ENCODE measurements at regions of chr17 and their contacts with region 1.

Region 1: GRCh38 chr17:64020056-64020766 is at the start of gene ICAM2:
- DNase-seq: peak; percentile 95
- H3K4me3 Mint-ChIP-seq: peak within 1 kb of the TSS; percentile 97
- H3K27ac Mint-ChIP-seq: peak within 1 kb of the TSS; percentile 98
- H3K4me1 Mint-ChIP-seq: peaks cover 62% of the 10 kb centered on the region
- H3K27me3 Mint-ChIP-seq: no peaks in the 10 kb centered on the region
- total RNA-seq, gene ICAM2: 41.6 to 41.9 TPM

Region 2: GRCh38 chr17:63773381-63774140 is 246.7 kb before region 1 on chr17 and contains the start of gene CCDC47:
- CTCF ChIA-PET with region 1: no interaction called
- intact Hi-C with region 1: loop called (anchors 1 kb)
- DNase-seq: peak; percentile 99
- H3K4me3 Mint-ChIP-seq: peak within 1 kb of the TSS; percentile 98
- H3K27ac Mint-ChIP-seq: peak within 1 kb of the TSS; percentile 100
- H3K4me1 Mint-ChIP-seq: peaks cover 58% of the 10 kb centered on the region
- H3K27me3 Mint-ChIP-seq: no peaks in the 10 kb centered on the region
- total RNA-seq, gene CCDC47: 40.5 to 42.1 TPM

Region 3: GRCh38 chr17:63984651-63985386 is 35.4 kb before region 1 on chr17:
- CTCF ChIA-PET with region 1: interaction called, 9 read pairs
- intact Hi-C with region 1: loop called (anchors 1 kb)
- DNase-seq: peak; percentile 82
- H3K4me3 Mint-ChIP-seq: no peak overlapping the region
- H3K27ac Mint-ChIP-seq: peak overlapping the region; percentile 56
- H3K4me1 Mint-ChIP-seq: peaks cover 13% of the 10 kb centered on the region
- H3K27me3 Mint-ChIP-seq: no peaks in the 10 kb centered on the region

Region 4: GRCh38 chr17:63998721-63999677 is 21.2 kb before region 1 on chr17:
- CTCF ChIA-PET with region 1: interaction called, 13 read pairs
- intact Hi-C with region 1: loop called (anchors 1 kb)
- DNase-seq: peak; percentile 48
- H3K4me3 Mint-ChIP-seq: peak overlapping the region; percentile 86
- H3K27ac Mint-ChIP-seq: no peak overlapping the region
- H3K4me1 Mint-ChIP-seq: peaks cover 22% of the 10 kb centered on the region
- H3K27me3 Mint-ChIP-seq: no peaks in the 10 kb centered on the region

Region 5: GRCh38 chr17:64081802-64082799 is 61.9 kb after region 1 on chr17:
- CTCF ChIA-PET with region 1: interaction called, 5 read pairs
- intact Hi-C with region 1: loop called (anchors 1 kb)
- DNase-seq: peak; percentile 65
- H3K4me3 Mint-ChIP-seq: peak overlapping the region; percentile 38
- H3K27ac Mint-ChIP-seq: no peak overlapping the region
- H3K4me1 Mint-ChIP-seq: peaks cover 7% of the 10 kb centered on the region
- H3K27me3 Mint-ChIP-seq: no peaks in the 10 kb centered on the region

Region 6: GRCh38 chr17:64091116-64091515 is 70.9 kb after region 1 on chr17:
- CTCF ChIA-PET with region 1: no interaction called
- intact Hi-C with region 1: loop called (anchors 2 kb)
- DNase-seq: peak; percentile 34
- H3K4me3 Mint-ChIP-seq: no peak overlapping the region
- H3K27ac Mint-ChIP-seq: peak overlapping the region; percentile 80
- H3K4me1 Mint-ChIP-seq: peaks cover 71% of the 10 kb centered on the region
- H3K27me3 Mint-ChIP-seq: no peaks in the 10 kb centered on the region

Region 7: GRCh38 chr17:64496786-64497564 is 476.8 kb after region 1 on chr17 and contains the start of gene POLG2:
- CTCF ChIA-PET with region 1: no interaction called
- intact Hi-C with region 1: loop called (anchors 2 kb)
- DNase-seq: peak; percentile 96
- H3K4me3 Mint-ChIP-seq: peak within 1 kb of the TSS; percentile 100
- H3K27ac Mint-ChIP-seq: peak within 1 kb of the TSS; percentile 97
- H3K4me1 Mint-ChIP-seq: peaks cover 74% of the 10 kb centered on the region
- H3K27me3 Mint-ChIP-seq: no peaks in the 10 kb centered on the region
- total RNA-seq, gene POLG2: 23.4 to 26.9 TPM

Measured in activated naive CD4-positive, alpha-beta T cell treated with anti-CD3 and anti-CD28 coated beads for 36 hours (primary cell).